ENCODE measurements at regions of chr17 and their contacts with region 1.

Region 1: DNA sequence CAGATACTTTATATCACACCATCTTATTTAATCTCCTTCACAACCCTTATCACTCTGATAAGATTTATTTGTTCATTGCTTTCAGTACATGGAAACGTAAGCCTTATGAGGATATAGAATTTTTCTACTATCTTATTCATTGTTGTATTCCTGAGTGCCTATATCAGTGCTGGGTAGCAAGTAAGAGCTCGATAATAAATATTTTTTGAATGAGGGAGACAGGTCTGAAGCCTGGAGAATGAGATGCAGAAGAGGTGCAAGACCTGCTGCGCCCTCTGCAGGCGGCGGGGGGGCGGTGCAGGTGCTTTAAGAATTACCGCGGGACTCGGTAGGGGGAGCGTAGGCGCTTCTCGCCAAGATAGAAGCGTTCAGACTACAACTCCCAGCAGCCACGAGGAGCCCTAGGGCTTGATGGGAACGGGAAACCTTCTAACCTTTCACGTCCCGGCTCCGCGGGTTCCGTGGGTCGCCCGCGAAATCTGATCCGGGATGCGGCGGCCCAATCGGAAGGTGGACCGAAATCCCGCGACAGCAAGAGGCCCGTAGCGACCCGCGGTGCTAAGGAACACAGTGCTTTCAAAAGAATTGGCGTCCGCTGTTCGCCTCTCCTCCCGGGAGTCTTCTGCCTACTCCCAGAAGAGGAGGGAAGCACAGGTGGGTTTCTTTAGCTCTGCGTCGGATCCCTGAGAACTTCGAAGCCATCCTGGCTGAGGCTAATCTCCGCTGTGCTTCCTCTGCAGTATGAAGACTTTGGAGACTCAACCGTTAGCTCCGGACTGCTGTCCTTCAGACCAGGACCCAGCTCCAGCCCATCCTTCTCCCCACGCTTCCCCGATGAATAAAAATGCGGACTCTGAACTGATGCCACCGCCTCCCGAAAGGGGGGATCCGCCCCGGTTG is at the start of gene WRAP53:
- DNase-seq: peak; percentile 97
- H3K4me3 Mint-ChIP-seq: peak within 1 kb of the TSS; percentile 94
- H3K27ac Mint-ChIP-seq: peak within 1 kb of the TSS; percentile 96
- H3K4me1 Mint-ChIP-seq: peaks cover 39% of the 10 kb centered on the region
- H3K27me3 Mint-ChIP-seq: no peaks in the 10 kb centered on the region
- total RNA-seq, gene WRAP53: 18.6 to 18.8 TPM

Region 2: DNA sequence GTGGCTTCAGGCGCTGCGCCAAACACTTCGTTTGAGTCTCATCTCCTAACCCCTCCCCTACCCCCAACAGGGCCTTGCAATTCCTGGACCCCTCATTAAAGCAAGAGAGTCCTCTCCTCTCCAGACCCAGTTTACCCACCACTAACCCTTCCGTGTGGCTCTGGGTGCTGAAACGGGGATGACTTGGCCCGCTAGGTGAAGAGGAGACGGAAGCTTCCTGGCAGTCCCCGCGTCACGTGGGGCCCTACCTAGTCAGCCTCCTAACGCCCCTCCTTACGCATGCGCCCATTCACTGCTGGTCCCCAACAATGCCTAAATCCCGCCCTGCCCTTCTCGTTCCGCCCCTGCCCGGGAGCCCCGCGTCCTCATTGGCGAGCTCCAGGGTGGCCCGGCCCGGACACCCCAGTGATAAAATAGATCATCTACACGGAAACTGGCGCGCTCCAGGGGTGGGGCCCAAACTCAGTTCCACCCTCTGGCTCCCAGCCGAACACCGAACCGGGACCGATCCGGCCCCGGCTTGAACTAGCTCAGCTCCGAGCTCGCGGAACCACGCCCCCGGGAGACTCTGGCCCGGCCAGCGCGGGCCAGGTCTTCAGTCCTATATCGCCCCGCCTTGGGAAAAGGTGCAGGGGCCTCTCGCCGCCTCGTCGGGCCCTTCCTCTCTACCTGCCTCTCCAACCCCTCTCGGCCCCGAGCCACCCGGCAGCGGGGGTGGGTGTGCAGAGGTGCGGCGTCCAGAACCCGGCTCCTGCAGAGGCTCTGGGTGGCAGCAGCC is 652.4 kb before region 1 on chr17 and contains the start of gene SLC16A13:
- CTCF ChIA-PET with region 1: no interaction called
- POLR2A ChIA-PET with region 1: interaction called, 12 read pairs
- DNase-seq: peak; percentile 99
- H3K4me3 Mint-ChIP-seq: peak within 1 kb of the TSS; percentile 85
- H3K27ac Mint-ChIP-seq: peak within 1 kb of the TSS; percentile 96
- H3K4me1 Mint-ChIP-seq: peaks cover 60% of the 10 kb centered on the region
- H3K27me3 Mint-ChIP-seq: no peaks in the 10 kb centered on the region
- total RNA-seq, gene SLC16A13: 26.8 to 28.9 TPM

Region 3: DNA sequence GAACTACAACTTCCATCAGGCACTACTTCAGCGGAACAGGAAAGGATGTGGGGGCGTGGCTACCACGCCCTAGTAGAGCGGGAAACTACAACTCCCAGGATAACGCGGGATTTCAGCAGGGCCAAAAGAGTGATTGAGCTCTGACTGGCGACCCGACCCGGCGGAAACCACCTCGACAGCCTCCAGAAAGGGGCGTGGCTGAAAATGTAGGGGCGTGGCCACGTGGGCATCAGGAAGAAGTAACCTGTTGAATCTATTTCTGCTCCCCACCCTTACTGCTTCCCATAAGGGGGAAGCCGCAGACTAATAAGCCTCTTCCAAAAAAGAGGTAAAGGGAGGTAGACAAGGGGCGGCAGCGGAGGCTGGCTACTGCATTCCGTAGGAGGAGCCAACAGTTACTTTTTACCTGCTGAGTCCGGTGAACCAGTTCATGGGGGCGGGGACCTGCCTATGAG is 252.9 kb before region 1 on chr17 and contains the start of gene TMEM102:
- CTCF ChIA-PET with region 1: interaction called, 35 read pairs
- POLR2A ChIA-PET with region 1: interaction called, 29 read pairs
- DNase-seq: peak; percentile 98
- H3K4me3 Mint-ChIP-seq: peak within 1 kb of the TSS; percentile 90
- H3K27ac Mint-ChIP-seq: peak within 1 kb of the TSS; percentile 98
- H3K4me1 Mint-ChIP-seq: peaks cover 39% of the 10 kb centered on the region
- H3K27me3 Mint-ChIP-seq: peaks cover 20% of the 10 kb centered on the region
- total RNA-seq, gene TMEM102: 18.0 TPM

Region 4: DNA sequence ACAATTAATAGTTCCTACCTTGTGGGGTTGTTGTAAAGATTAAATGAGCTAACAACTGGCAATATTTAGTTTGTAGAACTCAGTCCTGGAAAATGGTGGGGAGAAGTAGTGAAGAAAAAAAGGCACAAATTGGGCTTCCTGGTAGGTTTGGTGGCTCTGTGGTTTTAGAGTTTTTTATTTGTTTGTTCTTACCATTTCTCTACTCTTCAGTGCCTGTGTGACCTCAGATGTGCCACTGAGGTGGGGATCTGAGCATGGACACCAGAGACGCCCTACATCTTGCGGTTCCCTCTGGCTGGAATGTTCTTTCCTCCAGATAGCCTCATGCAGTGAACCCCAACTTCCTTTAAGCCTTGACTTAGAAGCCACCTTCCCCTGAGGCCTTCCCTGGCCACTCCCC is 216.4 kb before region 1 on chr17:
- CTCF ChIA-PET with region 1: no interaction called
- POLR2A ChIA-PET with region 1: no interaction called
- DNase-seq: no peak
- H3K4me3 Mint-ChIP-seq: no peak overlapping the region
- H3K27ac Mint-ChIP-seq: no peak overlapping the region
- H3K4me1 Mint-ChIP-seq: peaks cover 20% of the 10 kb centered on the region
- H3K27me3 Mint-ChIP-seq: no peaks in the 10 kb centered on the region

Region 5: GRCh38 chr17:7583253-7584109 is 104.7 kb before region 1 on chr17 and contains the start of gene MPDU1:
- CTCF ChIA-PET with region 1: interaction called, 29 read pairs
- POLR2A ChIA-PET with region 1: interaction called, 129 read pairs
- DNase-seq: peak; percentile 96
- H3K4me3 Mint-ChIP-seq: peak within 1 kb of the TSS; percentile 97
- H3K27ac Mint-ChIP-seq: peak within 1 kb of the TSS; percentile 99
- H3K4me1 Mint-ChIP-seq: peaks cover 68% of the 10 kb centered on the region
- H3K27me3 Mint-ChIP-seq: no peaks in the 10 kb centered on the region
- total RNA-seq, gene MPDU1: 54.1 to 58.6 TPM

Region 6: GRCh38 chr17:7644775-7645174 is 43.4 kb before region 1 on chr17:
- CTCF ChIA-PET with region 1: interaction called, 16 read pairs
- POLR2A ChIA-PET with region 1: interaction called, 28 read pairs
- DNase-seq: peak; percentile 37
- H3K4me3 Mint-ChIP-seq: no peak overlapping the region
- H3K27ac Mint-ChIP-seq: no peak overlapping the region
- H3K4me1 Mint-ChIP-seq: peaks cover 27% of the 10 kb centered on the region
- H3K27me3 Mint-ChIP-seq: peaks cover 11% of the 10 kb centered on the region

Region 7: DNA sequence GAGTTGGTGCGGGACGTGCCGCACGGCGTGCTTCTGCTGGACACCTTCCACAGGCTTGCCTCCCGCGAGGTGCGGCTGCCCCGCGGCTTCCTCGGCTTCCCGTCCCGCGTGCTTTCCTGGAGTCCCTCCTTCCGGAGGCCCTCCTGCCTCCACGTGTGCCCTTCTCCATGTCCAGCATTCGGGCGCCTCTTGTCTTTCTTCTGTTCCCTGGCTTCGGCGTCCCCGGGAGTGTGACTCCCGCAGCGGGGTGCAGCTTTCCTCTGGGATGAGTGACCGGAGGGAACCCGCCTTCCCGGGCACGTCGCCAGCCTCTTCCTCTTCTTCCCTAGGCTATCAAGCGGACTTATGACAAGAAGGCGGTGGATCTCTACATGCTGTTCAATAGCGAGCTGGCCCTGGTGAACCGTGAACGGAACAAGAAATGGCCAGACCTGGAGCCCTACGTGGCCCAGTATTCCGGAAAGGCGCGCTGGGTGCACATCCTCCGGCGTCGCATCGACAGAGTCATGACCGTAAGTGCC is 52.4 kb after region 1 on chr17:
- CTCF ChIA-PET with region 1: no interaction called
- POLR2A ChIA-PET with region 1: no interaction called
- DNase-seq: no peak
- H3K4me3 Mint-ChIP-seq: no peak overlapping the region
- H3K27ac Mint-ChIP-seq: no peak overlapping the region
- H3K4me1 Mint-ChIP-seq: no peaks in the 10 kb centered on the region
- H3K27me3 Mint-ChIP-seq: peaks cover 21% of the 10 kb centered on the region

Region 8: GRCh38 chr17:7809086-7809790 is 121.1 kb after region 1 on chr17:
- CTCF ChIA-PET with region 1: no interaction called
- POLR2A ChIA-PET with region 1: no interaction called
- DNase-seq: no peak
- H3K4me3 Mint-ChIP-seq: no peak overlapping the region
- H3K27ac Mint-ChIP-seq: no peak overlapping the region
- H3K4me1 Mint-ChIP-seq: no peaks in the 10 kb centered on the region
- H3K27me3 Mint-ChIP-seq: peaks cover 8% of the 10 kb centered on the region

Region 9: GRCh38 chr17:7844292-7845154 is 156.4 kb after region 1 on chr17:
- CTCF ChIA-PET with region 1: interaction called, 3 read pairs
- POLR2A ChIA-PET with region 1: interaction called, 38 read pairs
- DNase-seq: peak; percentile 89
- H3K4me3 Mint-ChIP-seq: peak overlapping the region; percentile 97
- H3K27ac Mint-ChIP-seq: peak overlapping the region; percentile 97
- H3K4me1 Mint-ChIP-seq: peaks cover 35% of the 10 kb centered on the region
- H3K27me3 Mint-ChIP-seq: no peaks in the 10 kb centered on the region

Region 10: GRCh38 chr17:8248751-8249607 is 560.8 kb after region 1 on chr17 and contains the start of gene PFAS:
- CTCF ChIA-PET with region 1: interaction called, 4 read pairs
- POLR2A ChIA-PET with region 1: interaction called, 11 read pairs
- DNase-seq: peak; percentile 96
- H3K4me3 Mint-ChIP-seq: peak within 1 kb of the TSS; percentile 94
- H3K27ac Mint-ChIP-seq: peak within 1 kb of the TSS; percentile 100
- H3K4me1 Mint-ChIP-seq: peaks cover 50% of the 10 kb centered on the region
- H3K27me3 Mint-ChIP-seq: no peaks in the 10 kb centered on the region
- total RNA-seq, gene PFAS: 43.6 to 45.9 TPM